PC-9 (cell line): ENCODE measurements at regions of chr15 and their contacts with region 1.

Region 1: DNA sequence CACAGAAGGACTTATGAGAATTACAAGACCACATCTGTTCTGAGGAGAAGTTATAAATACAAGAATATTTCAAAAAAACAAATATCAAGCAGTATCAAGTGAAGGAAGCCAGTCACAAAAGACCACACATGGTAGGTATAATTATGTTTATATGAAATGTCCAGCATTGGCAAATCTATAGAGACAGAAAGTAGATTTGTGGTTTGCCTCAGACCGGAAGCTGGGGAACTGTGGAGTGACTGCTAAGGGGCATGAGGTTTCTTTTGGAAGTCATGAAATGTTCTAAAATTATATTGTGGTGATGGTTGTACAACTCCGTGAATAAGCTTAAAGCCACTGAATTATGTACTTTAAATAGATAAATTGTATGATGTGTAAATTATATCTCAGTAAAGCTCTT is 136.9 kb downstream of the FRMD5 start:
- DNase-seq: no peak
- H3K4me3 ChIP-seq: no peak overlapping the region
- H3K27ac ChIP-seq: no peak overlapping the region
- H3K4me1 ChIP-seq: no peaks in the 10 kb centered on the region
- H3K27me3 ChIP-seq: no peaks in the 10 kb centered on the region
- CTCF ChIP-seq: no peak

Region 2: DNA sequence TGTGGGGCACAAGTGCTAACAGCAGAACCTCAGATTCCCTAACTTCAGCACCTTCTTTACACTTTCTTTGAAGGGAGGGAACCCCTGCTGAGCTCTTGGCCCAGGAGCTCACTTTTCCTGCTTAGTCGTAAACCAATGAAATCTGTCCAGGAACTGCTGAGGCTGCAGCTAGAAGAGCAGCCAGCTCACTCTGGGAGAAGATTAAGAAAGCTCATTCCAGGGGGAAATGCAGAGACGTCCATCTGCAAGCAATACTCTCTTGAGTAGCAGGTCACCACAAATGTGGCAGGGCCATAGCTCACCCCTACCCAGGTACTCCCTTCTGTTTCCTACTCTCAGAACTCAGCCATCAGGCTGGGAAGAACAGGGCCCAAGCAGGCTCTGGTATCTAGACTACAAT is 128.0 kb before region 1 on chr15:
- CTCF ChIA-PET with region 1: no interaction called
- POLR2A ChIA-PET with region 1: interaction called, 14 read pairs
- intact Hi-C with region 1: no loop called
- DNase-seq: peak; percentile 29 to 52
- H3K4me3 ChIP-seq: no peak overlapping the region
- H3K27ac ChIP-seq: no peak overlapping the region
- H3K4me1 ChIP-seq: peaks cover 7% of the 10 kb centered on the region; the same call in 1 of the 2 replicates
- H3K27me3 ChIP-seq: no peaks in the 10 kb centered on the region
- CTCF ChIP-seq: no peak

Region 3: GRCh38 chr15:44340410-44340809 is 282.3 kb after region 1 on chr15:
- CTCF ChIA-PET with region 1: no interaction called
- POLR2A ChIA-PET with region 1: no interaction called
- intact Hi-C with region 1: no loop called
- DNase-seq: peak; percentile 65 to 71
- H3K4me3 ChIP-seq: no peak overlapping the region
- H3K27ac ChIP-seq: peak overlapping the region; percentile 19; the same call in 1 of the 2 replicates
- H3K4me1 ChIP-seq: peaks cover 8% of the 10 kb centered on the region; the same call in 1 of the 2 replicates
- H3K27me3 ChIP-seq: no peaks in the 10 kb centered on the region
- CTCF ChIP-seq: no peak